ENCODE measurements at regions of chr4 and their contacts with region 1.

Region 1: GRCh38 chr4:8795774-8796495 is 75.7 kb downstream of the HMX1 start:
- DNase-seq: no peak
- CTCF ChIP-seq: no peak

Region 2: DNA sequence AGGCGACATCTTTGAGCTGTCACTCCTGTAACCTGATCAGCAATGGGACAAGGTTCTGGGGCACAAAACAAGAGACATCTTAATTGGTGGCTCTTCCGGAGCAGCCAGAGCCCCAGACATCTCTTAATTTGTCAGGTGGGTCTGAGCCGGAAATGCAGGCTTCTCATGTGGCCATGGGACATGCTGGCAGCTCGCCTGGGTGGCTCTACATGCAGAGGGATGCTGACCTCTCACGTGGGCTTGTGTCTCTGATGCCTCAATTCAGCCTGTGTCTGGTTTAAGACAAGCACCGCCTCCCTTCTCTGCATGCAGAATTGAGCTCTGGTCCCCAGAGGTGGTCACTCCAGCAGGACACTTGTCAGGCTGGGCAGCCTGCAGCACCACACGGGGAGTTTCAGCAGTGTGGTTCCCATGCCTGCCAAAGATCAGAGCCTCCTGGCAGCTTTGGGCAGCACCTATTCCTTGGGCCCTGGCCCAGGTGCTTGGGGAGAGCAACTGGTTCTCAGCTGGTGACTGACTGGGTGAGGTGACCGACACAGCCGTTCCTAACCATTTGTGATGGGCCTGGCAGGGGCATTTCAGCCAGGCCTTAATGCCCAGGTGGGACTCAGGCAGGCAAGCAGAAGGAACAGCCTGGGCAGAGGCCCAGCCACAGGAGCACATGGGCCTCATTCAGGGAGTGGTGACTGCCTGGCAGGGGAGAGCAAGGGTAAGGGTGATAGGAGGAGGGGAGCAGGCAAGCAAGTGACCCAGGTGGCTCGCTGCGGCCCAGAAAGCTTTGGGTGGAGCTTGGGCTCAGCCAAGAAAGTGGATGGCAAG is 22.3 kb after region 1 on chr4:
- CTCF ChIA-PET with region 1: interaction called, 17 read pairs
- POLR2A ChIA-PET with region 1: no interaction called
- DNase-seq: no peak
- CTCF ChIP-seq: no peak